Activated B cell treated with CpG ODN at 0.5 μM for 24 hours (primary cell): ENCODE measurements at regions of chr15 and their contacts with region 1.

Region 1: DNA sequence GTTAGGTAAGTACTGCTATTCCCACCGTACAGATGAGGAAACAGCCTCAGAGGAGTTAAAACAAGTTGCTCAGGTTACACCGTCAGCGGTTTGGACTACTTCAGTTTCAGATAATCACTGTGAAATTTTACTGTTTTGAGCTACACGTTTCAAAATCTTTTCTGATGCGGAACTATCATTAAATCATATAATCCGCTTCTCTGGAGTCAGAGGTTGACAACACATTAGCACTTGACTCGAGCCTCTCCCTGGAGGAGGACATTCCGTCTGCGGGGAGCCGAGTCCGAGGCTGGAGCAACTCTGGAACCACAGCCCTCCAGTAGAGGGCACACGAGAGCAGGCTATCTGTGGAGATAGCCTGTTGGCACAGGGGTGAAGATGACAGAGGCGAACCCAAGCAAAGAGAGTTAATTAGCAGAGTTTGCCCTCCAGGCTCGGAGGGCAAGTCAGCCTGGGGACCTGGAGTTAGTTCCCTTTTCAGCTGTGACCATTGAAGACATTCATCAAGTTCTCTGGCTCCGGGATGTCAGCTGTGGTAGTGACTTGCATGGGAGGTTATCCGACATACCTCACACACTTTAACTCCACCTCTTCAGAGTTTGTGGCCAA is 131.2 kb downstream of the IGF1R start:
- DNase-seq: peak; percentile 60
- ATAC-seq: peak; percentile 81
- H3K4me3 Mint-ChIP-seq: no peak overlapping the region
- H3K27ac Mint-ChIP-seq: no peak overlapping the region
- H3K4me1 Mint-ChIP-seq: peaks cover 25% of the 10 kb centered on the region
- H3K27me3 Mint-ChIP-seq: peaks cover 17% of the 10 kb centered on the region
- CTCF ChIP-seq: no peak

Region 2: GRCh38 chr15:98700519-98700918 is 79.0 kb before region 1 on chr15:
- CTCF ChIA-PET with region 1: no interaction called
- POLR2A ChIA-PET with region 1: no interaction called
- intact Hi-C with region 1: no loop called
- DNase-seq: no peak
- ATAC-seq: no peak
- H3K4me3 Mint-ChIP-seq: no peak overlapping the region
- H3K27ac Mint-ChIP-seq: no peak overlapping the region
- H3K4me1 Mint-ChIP-seq: peaks cover 10% of the 10 kb centered on the region
- H3K27me3 Mint-ChIP-seq: peaks cover 6% of the 10 kb centered on the region
- CTCF ChIP-seq: no peak

Region 3: DNA sequence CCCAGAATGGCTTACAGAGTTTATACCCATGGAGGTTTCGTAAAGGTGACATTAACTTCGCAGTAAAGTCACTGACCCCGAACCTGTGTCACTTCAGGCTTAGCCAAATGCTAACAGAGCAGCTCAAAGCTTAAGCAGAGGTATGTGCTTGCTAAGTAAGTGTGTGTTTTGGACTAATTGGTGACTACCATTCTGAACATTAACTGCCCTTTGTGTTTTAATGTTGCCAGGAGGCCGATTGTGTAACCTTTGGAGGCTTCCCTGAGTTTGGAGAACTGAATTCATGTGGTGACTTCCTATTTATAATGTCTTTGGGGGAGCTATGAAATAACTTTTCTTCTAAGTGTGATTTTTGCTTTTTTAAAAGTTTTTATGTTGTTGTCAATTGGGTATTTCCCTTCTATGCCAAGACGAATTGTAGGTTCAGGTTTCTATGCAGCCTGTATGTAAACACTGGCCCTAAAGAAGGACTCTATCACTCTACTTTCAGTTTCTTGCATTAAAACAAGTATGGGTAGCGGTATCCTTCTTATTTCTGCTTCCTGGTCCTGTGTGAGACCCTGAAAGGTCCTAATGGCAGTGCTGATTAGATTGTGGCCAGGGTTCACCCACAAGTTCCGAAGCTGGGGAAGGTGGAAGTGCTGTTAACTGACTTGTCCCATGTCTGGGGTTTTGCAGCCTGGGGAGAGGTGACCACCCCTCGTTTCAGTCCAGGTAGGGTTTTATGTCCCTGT is 44.9 kb before region 1 on chr15:
- CTCF ChIA-PET with region 1: no interaction called
- POLR2A ChIA-PET with region 1: no interaction called
- intact Hi-C with region 1: no loop called
- DNase-seq: no peak
- ATAC-seq: no peak
- H3K4me3 Mint-ChIP-seq: no peak overlapping the region
- H3K27ac Mint-ChIP-seq: no peak overlapping the region
- H3K4me1 Mint-ChIP-seq: peaks cover 1% of the 10 kb centered on the region
- H3K27me3 Mint-ChIP-seq: peaks cover 2% of the 10 kb centered on the region
- CTCF ChIP-seq: no peak

Region 4: DNA sequence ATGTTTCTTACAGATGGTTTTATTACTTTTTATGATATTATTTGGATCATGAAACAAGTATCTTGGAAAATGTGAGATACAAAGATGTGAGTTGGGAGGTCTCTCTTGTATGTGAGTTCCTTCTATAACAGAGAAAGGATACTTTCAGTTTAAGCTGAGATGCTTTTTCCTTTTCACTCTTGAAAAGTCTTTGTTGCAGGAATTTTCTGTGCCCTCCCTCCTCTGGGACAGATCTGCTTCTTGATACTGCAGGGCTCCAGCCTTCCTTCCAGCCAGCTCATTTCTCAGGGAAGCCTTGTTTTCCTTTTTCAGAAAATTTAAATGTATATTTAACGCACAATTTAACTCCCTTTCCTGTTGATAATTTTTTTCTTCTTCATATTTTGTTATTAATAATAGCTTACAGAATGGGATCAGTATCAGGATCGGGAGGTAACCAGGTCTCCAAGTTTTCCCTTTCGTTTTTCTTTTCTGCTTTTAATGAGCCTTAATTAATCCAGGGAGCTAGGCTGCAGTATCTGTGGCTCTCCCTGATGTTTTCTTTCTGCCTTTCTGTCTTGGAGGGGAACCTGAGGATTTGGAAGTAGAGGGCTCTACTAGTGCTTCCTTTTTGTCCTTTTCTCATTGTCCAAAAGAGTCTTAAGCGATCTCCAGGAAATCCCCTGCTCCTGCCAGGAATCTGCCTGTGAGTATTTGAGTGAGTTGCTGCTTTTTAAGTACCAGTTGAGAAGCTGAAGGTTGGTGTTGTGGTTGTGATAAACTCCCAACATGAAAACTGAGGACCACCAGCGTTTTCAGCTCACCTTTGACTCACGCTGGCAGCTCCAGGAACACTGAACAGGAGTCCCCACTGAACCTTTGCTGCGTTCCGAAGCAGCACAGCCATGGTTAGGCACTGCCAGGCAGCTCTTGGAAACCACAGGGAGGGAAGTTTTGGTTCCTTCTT is 25.6 kb before region 1 on chr15:
- CTCF ChIA-PET with region 1: no interaction called
- POLR2A ChIA-PET with region 1: no interaction called
- intact Hi-C with region 1: no loop called
- DNase-seq: no peak
- ATAC-seq: no peak
- H3K4me3 Mint-ChIP-seq: no peak overlapping the region
- H3K27ac Mint-ChIP-seq: no peak overlapping the region
- H3K4me1 Mint-ChIP-seq: peaks cover 1% of the 10 kb centered on the region
- H3K27me3 Mint-ChIP-seq: no peaks in the 10 kb centered on the region
- CTCF ChIP-seq: no peak

Region 5: GRCh38 chr15:98881526-98882520 is 102.3 kb after region 1 on chr15:
- CTCF ChIA-PET with region 1: interaction called, 45 read pairs
- POLR2A ChIA-PET with region 1: no interaction called
- intact Hi-C with region 1: loop called (anchors 1 kb)
- DNase-seq: no peak
- ATAC-seq: peak; percentile 42
- H3K4me3 Mint-ChIP-seq: no peak overlapping the region
- H3K27ac Mint-ChIP-seq: no peak overlapping the region
- H3K4me1 Mint-ChIP-seq: peaks cover 8% of the 10 kb centered on the region
- H3K27me3 Mint-ChIP-seq: peaks cover 2% of the 10 kb centered on the region
- CTCF ChIP-seq: peak; percentile 34

Region 6: GRCh38 chr15:99076552-99077308 is 297.2 kb after region 1 on chr15:
- CTCF ChIA-PET with region 1: interaction called, 8 read pairs
- POLR2A ChIA-PET with region 1: no interaction called
- intact Hi-C with region 1: loop called (anchors 1 kb)
- DNase-seq: no peak
- ATAC-seq: peak; percentile 69
- H3K4me3 Mint-ChIP-seq: peak overlapping the region; percentile 81
- H3K27ac Mint-ChIP-seq: no peak overlapping the region
- H3K4me1 Mint-ChIP-seq: peaks cover 8% of the 10 kb centered on the region
- H3K27me3 Mint-ChIP-seq: peaks cover 16% of the 10 kb centered on the region
- CTCF ChIP-seq: peak; percentile 47